BJ (cell line): ENCODE measurements at regions of chr17 and their contacts with region 1.

Region 1: DNA sequence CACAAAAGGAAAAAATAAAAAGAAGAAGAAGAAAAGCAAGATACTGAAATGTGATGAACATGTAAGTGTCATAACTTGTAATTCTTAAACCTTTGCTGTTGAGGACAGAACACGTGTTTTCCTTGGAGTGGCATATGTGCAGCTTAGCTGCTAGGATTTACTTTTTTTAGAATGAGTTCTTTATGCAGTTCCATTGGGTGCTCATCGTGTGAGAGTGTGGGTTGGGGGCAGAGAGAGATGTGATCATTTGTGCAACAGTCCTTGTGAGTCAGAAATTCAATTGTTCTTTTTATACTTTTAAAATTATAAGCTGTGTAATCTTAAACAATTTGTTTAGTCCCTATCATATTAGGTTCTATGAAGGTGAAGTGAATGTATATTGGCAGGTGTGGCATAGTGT is 5.5 kb upstream of the DHRS11 start:
- DNase-seq: no peak
- H3K4me3 ChIP-seq: no peak overlapping the region
- H3K27me3 ChIP-seq: no peaks in the 10 kb centered on the region
- CTCF ChIP-seq: no peak

Region 2: GRCh38 chr17:36514856-36515255 is 71.3 kb before region 1 on chr17:
- CTCF ChIA-PET with region 1: no interaction called
- POLR2A ChIA-PET with region 1: no interaction called
- DNase-seq: no peak
- H3K4me3 ChIP-seq: no peak overlapping the region
- H3K27me3 ChIP-seq: no peaks in the 10 kb centered on the region
- CTCF ChIP-seq: no peak

Region 3: DNA sequence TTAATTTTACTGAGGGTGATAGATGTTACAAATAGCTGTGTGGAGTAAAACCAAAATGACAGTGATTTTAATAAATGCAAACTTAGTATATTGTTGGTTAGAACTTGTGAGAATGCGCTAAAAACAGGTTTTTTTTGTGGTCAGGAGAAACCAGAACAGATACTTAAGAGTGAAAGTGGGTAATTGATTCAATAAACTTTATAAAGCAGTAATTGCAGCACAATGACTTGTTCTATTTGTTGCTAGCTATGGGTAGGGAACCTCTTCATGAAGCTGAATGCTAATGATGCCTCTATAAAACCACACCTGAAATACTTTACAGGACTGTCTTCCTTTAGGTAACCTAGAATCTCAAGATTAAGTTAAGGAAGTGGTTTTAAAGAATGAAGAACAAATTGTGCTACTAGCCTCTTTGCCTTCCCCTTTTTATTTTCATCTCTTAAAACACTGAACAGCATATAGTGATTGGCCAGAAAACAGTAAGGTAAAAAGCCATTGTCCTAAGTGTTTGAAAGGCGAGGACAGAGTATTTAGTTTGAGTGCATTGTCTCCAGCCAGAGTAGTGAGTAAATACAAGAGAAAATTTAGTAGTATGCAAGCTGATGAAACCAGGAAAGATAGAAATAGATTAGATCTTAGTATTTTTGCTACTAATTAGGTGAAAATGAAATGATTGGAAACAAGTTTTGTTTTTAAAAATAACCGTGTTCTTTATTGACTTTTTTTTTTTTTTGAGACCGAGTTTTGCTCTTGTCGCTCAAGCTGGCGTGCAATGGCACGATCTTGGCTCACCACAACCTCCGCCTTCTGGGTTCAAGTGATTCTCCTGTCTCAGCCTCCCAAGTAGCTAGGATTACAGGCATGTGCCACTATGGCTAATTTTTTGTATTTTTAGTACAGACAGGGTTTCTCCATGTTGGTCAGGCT is 35.4 kb before region 1 on chr17:
- CTCF ChIA-PET with region 1: no interaction called
- POLR2A ChIA-PET with region 1: no interaction called
- DNase-seq: no peak
- H3K4me3 ChIP-seq: no peak overlapping the region
- H3K27me3 ChIP-seq: no peaks in the 10 kb centered on the region
- CTCF ChIP-seq: no peak

Region 4: DNA sequence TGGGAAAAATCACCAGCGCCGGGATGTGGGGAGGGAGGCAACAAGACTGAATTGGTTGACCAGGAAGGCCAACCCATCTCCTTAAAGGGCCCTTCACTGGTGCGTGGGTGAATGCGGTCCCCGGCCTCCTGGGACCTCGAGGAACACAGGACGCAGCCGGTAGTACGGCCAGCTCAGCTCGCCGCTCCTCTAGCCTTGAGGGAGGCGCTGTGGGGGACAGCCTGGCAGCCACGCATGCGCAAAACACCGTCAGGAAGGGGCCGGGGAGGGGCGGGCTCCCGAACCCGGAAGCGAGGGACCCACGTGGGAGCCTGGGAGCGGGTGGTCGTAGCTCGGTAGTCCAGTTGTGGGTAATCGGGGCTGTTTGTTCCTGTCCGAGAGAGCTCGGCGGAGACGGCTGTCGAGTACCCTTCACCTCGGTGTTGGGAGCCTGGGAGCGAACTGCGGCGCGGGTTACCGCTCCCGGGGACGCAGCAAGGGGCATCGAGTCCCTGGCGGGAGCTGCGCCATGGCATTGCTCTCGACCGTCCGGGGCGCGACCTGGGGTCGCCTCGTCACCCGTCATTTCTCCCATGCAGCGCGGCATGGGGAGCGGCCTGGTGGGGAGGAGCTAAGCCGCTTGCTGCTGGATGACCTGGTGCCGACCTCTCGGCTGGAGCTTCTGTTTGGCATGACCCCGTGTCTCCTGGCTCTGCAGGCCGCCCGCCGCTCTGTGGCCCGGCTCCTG is 15.3 kb after region 1 on chr17 and contains the start of gene MRM1:
- CTCF ChIA-PET with region 1: interaction called, 10 read pairs
- POLR2A ChIA-PET with region 1: no interaction called
- DNase-seq: peak; percentile 72
- H3K4me3 ChIP-seq: peak within 1 kb of the TSS; percentile 92
- H3K27me3 ChIP-seq: no peaks in the 10 kb centered on the region
- CTCF ChIP-seq: peak; percentile 30
- polyA plus RNA-seq, gene MRM1: 3.0 and 3.9 TPM in 2 replicates